ENCODE measurements at regions of chr10 and their contacts with region 1.

Region 1: DNA sequence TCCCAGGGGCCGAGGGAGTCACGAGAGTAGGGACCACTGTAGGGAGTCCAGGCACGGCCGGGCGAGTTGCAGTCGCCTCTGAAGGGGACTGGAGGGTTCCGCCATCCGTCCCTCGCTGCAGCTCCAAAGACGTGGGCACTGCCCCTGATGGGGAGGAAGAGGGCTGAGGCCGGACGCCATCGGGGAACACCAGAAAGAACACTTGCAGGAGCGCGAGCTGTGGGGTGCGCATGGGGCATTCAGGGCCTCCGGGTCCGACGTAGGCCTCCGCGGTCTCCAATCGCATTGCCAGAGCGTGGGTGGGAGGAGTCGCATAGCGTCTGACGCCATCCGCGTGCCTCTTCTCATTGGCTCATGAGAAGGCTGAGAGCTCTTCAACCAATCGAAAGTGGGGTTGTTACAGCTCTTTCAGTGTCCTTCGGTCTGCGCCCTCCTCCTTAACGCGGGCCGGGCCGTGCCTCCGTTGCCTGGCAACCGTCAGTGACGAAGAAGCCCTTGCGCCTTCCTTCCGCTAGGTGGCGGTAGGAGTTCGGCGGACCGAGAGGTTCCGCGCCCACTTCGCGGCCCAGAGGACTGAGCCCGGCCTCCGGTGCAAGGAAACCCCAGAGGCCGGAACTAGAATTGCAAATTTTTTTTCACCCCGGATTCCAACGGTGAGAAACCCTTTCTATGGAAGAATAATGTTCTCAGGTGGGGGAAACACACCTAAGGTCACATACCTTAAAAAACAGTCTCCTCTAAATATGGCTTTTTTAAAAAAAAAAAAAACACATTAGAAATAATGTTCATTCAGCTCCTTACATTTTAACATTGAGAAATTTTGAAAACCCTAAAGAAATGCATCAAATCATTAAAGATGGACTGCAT is at the start of gene TCTN3:
- DNase-seq: peak; percentile 100
- ATAC-seq: peak; percentile 99
- H3K4me3 ChIP-seq: peak within 1 kb of the TSS; percentile 64
- H3K27ac ChIP-seq: peak within 1 kb of the TSS; percentile 36
- H3K4me1 ChIP-seq: no peaks in the 10 kb centered on the region
- H3K27me3 ChIP-seq: no peaks in the 10 kb centered on the region
- CTCF ChIP-seq: peak; percentile 100; the same call in 1 of the 2 replicates
- POLR2A ChIP-seq: peak; percentile 72
- RAD21 ChIP-seq: peak; percentile 98
- total RNA-seq, gene TCTN3: 20.6 and 26.9 TPM in 2 replicates

Region 2: GRCh38 chr10:95513941-95514392 is 179.9 kb before region 1 on chr10:
- CTCF ChIA-PET with region 1: no interaction called
- POLR2A ChIA-PET with region 1: no interaction called
- dilution Hi-C with region 1: no loop called
- in situ Hi-C with region 1: no loop called
- intact Hi-C with region 1: no loop called
- DNase-seq: peak; percentile 10
- ATAC-seq: no peak
- H3K4me3 ChIP-seq: no peak overlapping the region
- H3K27ac ChIP-seq: no peak overlapping the region
- H3K4me1 ChIP-seq: no peaks in the 10 kb centered on the region
- H3K27me3 ChIP-seq: no peaks in the 10 kb centered on the region; the same call in 1 of the 2 replicates
- CTCF ChIP-seq: no peak
- POLR2A ChIP-seq: no peak
- RAD21 ChIP-seq: no peak

Region 3: DNA sequence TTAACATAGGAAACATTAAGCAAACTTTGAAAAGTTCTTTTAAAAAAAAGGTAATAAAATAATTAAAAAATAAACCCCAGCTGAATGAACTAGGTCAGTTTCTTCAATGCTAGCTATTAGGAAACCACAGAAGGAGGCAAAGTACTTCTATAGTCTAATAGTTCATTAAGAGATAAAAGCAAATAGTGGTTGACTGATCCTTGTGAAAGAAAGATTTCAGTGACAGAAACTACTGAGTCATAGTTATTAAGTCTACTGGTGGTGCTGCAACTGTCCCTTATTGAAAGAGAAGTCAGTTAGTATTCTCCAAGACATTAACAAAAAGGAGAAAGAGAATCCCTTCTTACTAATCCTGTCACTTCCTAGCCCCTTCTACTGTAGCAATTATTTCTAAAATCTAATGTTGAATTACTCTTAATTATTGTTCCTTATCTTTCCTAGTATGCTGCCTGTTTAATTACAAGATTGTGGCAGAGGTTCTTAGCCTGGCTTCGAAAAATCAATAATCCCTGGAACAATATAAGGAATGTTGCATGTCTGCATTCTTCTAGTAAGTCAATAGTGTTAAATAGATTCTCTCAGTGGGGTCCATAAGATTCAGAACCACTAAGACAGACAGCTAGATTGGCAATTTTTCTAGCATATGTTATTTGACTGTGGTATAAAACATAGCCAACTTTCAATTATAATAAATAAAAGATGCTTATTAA is 18.3 kb before region 1 on chr10:
- CTCF ChIA-PET with region 1: interaction called, 21 read pairs
- POLR2A ChIA-PET with region 1: no interaction called
- dilution Hi-C with region 1: no loop called
- in situ Hi-C with region 1: no loop called
- intact Hi-C with region 1: no loop called
- DNase-seq: no peak
- ATAC-seq: no peak
- H3K4me3 ChIP-seq: no peak overlapping the region
- H3K27ac ChIP-seq: no peak overlapping the region
- H3K4me1 ChIP-seq: no peaks in the 10 kb centered on the region
- H3K27me3 ChIP-seq: no peaks in the 10 kb centered on the region
- CTCF ChIP-seq: no peak
- POLR2A ChIP-seq: no peak
- RAD21 ChIP-seq: no peak

Region 4: GRCh38 chr10:95755511-95756004 is 61.7 kb after region 1 on chr10:
- CTCF ChIA-PET with region 1: interaction called, 4 read pairs
- POLR2A ChIA-PET with region 1: no interaction called
- dilution Hi-C with region 1: no loop called
- in situ Hi-C with region 1: no loop called
- intact Hi-C with region 1: loop called (anchors 1 kb)
- DNase-seq: no peak
- ATAC-seq: no peak
- H3K4me3 ChIP-seq: no peak overlapping the region
- H3K27ac ChIP-seq: no peak overlapping the region
- H3K4me1 ChIP-seq: peaks cover 4% of the 10 kb centered on the region; the same call in 1 of the 2 replicates
- H3K27me3 ChIP-seq: no peaks in the 10 kb centered on the region
- CTCF ChIP-seq: no peak
- POLR2A ChIP-seq: no peak
- RAD21 ChIP-seq: no peak

Region 5: GRCh38 chr10:95864906-95865813 is 171.3 kb after region 1 on chr10:
- CTCF ChIA-PET with region 1: interaction called, 39 read pairs
- POLR2A ChIA-PET with region 1: no interaction called
- dilution Hi-C with region 1: no loop called
- in situ Hi-C with region 1: no loop called
- intact Hi-C with region 1: loop called (anchors 1 kb)
- DNase-seq: peak; percentile 86
- ATAC-seq: peak; percentile 99
- H3K4me3 ChIP-seq: no peak overlapping the region
- H3K27ac ChIP-seq: peak overlapping the region; percentile 44; the same call in 1 of the 2 replicates
- H3K4me1 ChIP-seq: peaks cover 2% of the 10 kb centered on the region; the same call in 1 of the 2 replicates
- H3K27me3 ChIP-seq: no peaks in the 10 kb centered on the region
- CTCF ChIP-seq: peak; percentile 84
- POLR2A ChIP-seq: no peak
- RAD21 ChIP-seq: peak; percentile 78

Region 6: GRCh38 chr10:96043033-96043932 is 349.4 kb after region 1 on chr10 and contains the start of gene CCNJ:
- CTCF ChIA-PET with region 1: no interaction called
- POLR2A ChIA-PET with region 1: no interaction called
- dilution Hi-C with region 1: no loop called
- in situ Hi-C with region 1: no loop called
- intact Hi-C with region 1: loop called (anchors 5 kb)
- DNase-seq: peak; percentile 87
- ATAC-seq: peak; percentile 92
- H3K4me3 ChIP-seq: peak within 1 kb of the TSS; percentile 87
- H3K27ac ChIP-seq: peak within 1 kb of the TSS; percentile 86
- H3K4me1 ChIP-seq: no peaks in the 10 kb centered on the region; the same call in 1 of the 2 replicates
- H3K27me3 ChIP-seq: no peaks in the 10 kb centered on the region
- CTCF ChIP-seq: 0 out of 2 replicates have a peak, but pooled peaks have one; percentile 11
- POLR2A ChIP-seq: peak; percentile 89
- RAD21 ChIP-seq: no peak
- total RNA-seq, gene CCNJ: 10.0 and 10.3 TPM in 2 replicates

Measured in IMR-90 (cell line).